ENCODE measurements at regions of chr19 and their contacts with region 1.

Region 1: DNA sequence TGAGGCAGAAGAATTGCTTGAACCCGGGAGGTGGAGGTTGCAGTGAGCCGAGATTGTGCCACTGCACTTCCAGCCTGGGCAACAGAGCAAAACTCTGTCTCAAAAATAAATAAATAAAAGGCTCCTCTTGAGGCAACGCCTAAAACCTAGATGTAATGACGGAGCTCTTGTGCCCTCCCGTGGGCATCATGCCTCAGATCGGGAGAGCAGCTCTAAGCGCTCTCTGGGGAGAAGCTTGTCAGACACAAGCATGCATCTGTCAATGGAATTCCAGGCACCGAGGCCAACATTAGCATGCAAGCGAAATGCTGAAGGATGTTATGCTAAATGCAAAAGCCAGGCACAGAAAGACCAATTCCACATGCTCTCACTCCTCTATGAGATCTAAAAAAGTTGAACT is 45.6 kb upstream of the MRI1 start:
- DNase-seq: no peak
- ATAC-seq: no peak
- H3K4me3 ChIP-seq: no peak overlapping the region
- H3K4me3 Mint-ChIP-seq: no peak overlapping the region
- H3K27ac ChIP-seq: no peak overlapping the region
- H3K27ac Mint-ChIP-seq: no peak overlapping the region
- H3K4me1 ChIP-seq: no peaks in the 10 kb centered on the region
- H3K4me1 Mint-ChIP-seq: no peaks in the 10 kb centered on the region
- H3K27me3 ChIP-seq: peaks cover 0 to 2% of the 10 kb centered on the region in 2 experiments
- H3K27me3 Mint-ChIP-seq: peaks cover 18% of the 10 kb centered on the region
- CTCF ChIP-seq: no peak

Region 2: GRCh38 chr19:13396250-13397080 is 322.3 kb before region 1 on chr19:
- CTCF ChIA-PET with region 1: no interaction called
- POLR2A ChIA-PET with region 1: no interaction called
- intact Hi-C with region 1: no loop called
- DNase-seq: peak in 1 of 9 experiments; percentile 5
- ATAC-seq: no peak
- H3K4me3 ChIP-seq: no peak overlapping the region
- H3K4me3 Mint-ChIP-seq: no peak overlapping the region
- H3K27ac ChIP-seq: no peak overlapping the region
- H3K27ac Mint-ChIP-seq: no peak overlapping the region
- H3K4me1 ChIP-seq: no peaks in the 10 kb centered on the region
- H3K4me1 Mint-ChIP-seq: no peaks in the 10 kb centered on the region
- H3K27me3 ChIP-seq: peaks cover 0 to 4% of the 10 kb centered on the region in 2 experiments
- H3K27me3 Mint-ChIP-seq: peaks cover 49% of the 10 kb centered on the region
- CTCF ChIP-seq: no peak

Region 3: GRCh38 chr19:13597640-13598039 is 121.1 kb before region 1 on chr19:
- CTCF ChIA-PET with region 1: interaction called, 3 read pairs
- POLR2A ChIA-PET with region 1: no interaction called
- intact Hi-C with region 1: loop called in 1 of 2 experiments (anchors 2 kb)
- DNase-seq: peak in 8 of 9 experiments; percentile 9 to 75 (median 34)
- ATAC-seq: peak; percentile 76
- H3K4me3 ChIP-seq: no peak overlapping the region
- H3K4me3 Mint-ChIP-seq: no peak overlapping the region
- H3K27ac ChIP-seq: no peak overlapping the region
- H3K27ac Mint-ChIP-seq: no peak overlapping the region
- H3K4me1 ChIP-seq: no peaks in the 10 kb centered on the region
- H3K4me1 Mint-ChIP-seq: no peaks in the 10 kb centered on the region
- H3K27me3 ChIP-seq: no peaks in the 10 kb centered on the region
- H3K27me3 Mint-ChIP-seq: peaks cover 24% of the 10 kb centered on the region
- CTCF ChIP-seq: peak; percentile 44